ENCODE measurements at regions of chr4 and their contacts with region 1.

Region 1: GRCh38 chr4:55948726-55949474 is at the start of gene CEP135:
- DNase-seq: peak; percentile 98
- H3K4me3 Mint-ChIP-seq: peak within 1 kb of the TSS; percentile 87
- H3K27ac Mint-ChIP-seq: peak within 1 kb of the TSS; percentile 89
- H3K4me1 Mint-ChIP-seq: peaks cover 33% of the 10 kb centered on the region
- H3K27me3 Mint-ChIP-seq: no peaks in the 10 kb centered on the region
- total RNA-seq, gene CEP135: 16.3 and 16.9 TPM in 2 replicates

Region 2: GRCh38 chr4:55546756-55547465 is 402.0 kb before region 1 on chr4 and contains the start of gene CLOCK:
- intact Hi-C with region 1: loop called (anchors 2 kb)
- DNase-seq: peak; percentile 95
- H3K4me3 Mint-ChIP-seq: peak within 1 kb of the TSS; percentile 84
- H3K27ac Mint-ChIP-seq: peak within 1 kb of the TSS; percentile 88
- H3K4me1 Mint-ChIP-seq: peaks cover 25% of the 10 kb centered on the region
- H3K27me3 Mint-ChIP-seq: peaks cover 30% of the 10 kb centered on the region
- total RNA-seq, gene CLOCK: 9.8 and 10.8 TPM in 2 replicates

Region 3: DNA sequence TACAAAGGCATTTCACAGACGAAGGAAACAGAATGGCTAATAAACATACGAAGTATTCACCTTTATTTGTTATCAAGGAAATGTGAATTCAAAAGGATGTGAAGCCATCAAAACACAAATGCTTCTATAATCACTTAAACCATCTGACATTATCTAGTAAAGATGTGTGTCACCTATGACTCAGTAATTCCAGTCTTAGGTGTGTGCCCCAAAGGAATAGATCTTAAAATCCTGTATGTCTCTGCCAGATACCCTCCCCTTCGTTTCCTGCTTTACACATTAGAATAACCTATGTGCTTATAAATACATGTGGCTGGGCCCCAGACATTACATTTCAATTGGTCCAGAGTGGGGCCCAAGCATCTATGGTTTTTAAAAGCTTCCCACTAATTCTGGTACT is 41.9 kb before region 1 on chr4:
- intact Hi-C with region 1: loop called (anchors 1 kb)
- DNase-seq: no peak
- H3K4me3 Mint-ChIP-seq: no peak overlapping the region
- H3K27ac Mint-ChIP-seq: peak overlapping the region; percentile 72
- H3K4me1 Mint-ChIP-seq: peaks cover 11% of the 10 kb centered on the region
- H3K27me3 Mint-ChIP-seq: no peaks in the 10 kb centered on the region

Region 4: DNA sequence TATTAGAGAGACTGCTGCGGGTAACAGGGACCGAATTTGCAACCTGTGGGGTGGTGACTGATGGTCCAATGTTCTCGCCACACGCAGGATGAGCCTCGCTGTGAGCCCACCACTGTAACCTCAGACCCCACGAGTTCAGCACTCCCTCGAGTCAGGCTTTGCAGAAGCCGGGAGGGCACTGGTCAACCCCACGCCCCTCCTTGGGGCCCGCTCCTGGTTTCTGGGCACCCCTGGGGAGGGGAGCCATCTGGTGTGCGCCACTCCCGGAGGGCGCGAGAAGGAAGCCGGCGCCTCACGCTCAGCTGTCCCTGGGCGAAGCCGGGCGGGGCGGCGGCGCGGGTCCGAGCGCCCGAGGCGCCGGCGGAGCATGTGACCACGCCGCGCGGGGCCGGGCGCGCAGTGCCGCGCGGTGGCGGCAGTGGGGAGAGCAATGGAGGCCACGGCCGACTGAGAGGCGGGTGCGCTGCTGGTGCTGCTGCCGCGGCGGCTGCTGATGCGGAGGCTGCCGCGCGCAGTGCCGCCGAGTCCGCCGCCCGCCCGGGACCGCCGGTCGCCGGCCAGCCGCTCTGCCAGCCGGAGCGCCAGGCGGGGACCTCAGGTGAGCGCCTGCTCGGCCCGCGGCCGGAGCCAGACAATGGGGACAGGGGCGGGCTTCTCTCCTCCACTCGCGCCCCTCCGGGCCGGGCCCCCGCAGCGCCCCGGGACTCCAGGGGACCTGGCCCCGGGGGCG is 100.0 kb after region 1 on chr4:
- intact Hi-C with region 1: loop called (anchors 1 kb)
- DNase-seq: peak; percentile 89
- H3K4me3 Mint-ChIP-seq: peak overlapping the region; percentile 80
- H3K27ac Mint-ChIP-seq: no peak overlapping the region
- H3K4me1 Mint-ChIP-seq: peaks cover 13% of the 10 kb centered on the region
- H3K27me3 Mint-ChIP-seq: peaks cover 54% of the 10 kb centered on the region

Region 5: GRCh38 chr4:56301181-56302076 is 352.5 kb after region 1 on chr4:
- intact Hi-C with region 1: loop called (anchors 1 kb)
- DNase-seq: peak; percentile 91
- H3K4me3 Mint-ChIP-seq: peak overlapping the region; percentile 21
- H3K27ac Mint-ChIP-seq: no peak overlapping the region
- H3K4me1 Mint-ChIP-seq: peaks cover 11% of the 10 kb centered on the region
- H3K27me3 Mint-ChIP-seq: peaks cover 3% of the 10 kb centered on the region

Region 6: DNA sequence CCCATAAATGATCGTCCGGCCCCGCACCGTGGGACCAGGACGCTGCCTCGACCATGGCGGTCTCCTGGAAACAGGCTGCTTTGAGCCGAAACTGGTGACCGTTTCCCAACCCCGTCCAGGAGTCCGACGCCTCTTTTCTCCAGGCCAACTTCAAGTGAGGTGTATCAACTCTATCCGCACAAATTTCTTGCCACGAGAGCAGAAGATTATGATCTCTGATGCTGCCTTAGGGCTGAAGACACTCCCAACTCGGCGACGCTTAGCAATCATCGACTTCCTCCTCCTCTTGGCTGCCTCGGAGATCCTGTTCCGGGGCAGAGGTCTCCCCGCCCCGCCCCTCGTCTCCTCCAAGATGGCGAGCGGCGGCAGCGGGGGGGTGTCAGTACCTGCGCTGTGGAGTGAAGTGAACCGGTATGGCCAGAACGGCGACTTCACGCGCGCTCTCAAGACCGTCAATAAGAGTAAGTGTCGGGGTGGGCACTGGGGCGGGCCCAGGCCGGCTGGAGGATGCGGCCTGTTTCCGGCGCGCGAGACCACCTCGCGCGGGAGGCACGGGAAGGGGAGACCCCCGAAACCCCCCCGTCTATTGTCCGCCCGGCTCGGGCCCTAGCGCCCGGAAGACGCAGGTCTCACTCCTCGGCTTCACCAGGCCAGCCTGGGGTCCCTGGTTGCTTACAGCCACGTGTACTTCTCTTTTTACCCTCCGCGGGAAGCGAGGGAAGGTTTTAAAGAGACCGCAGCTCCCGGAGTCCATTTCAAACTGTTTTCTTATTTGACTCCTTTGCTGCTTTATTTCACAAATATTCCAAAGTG is 518.6 kb after region 1 on chr4 and contains the start of gene SRP72:
- intact Hi-C with region 1: loop called (anchors 2 kb)
- DNase-seq: peak; percentile 97
- H3K4me3 Mint-ChIP-seq: peak within 1 kb of the TSS; percentile 94
- H3K27ac Mint-ChIP-seq: peak within 1 kb of the TSS; percentile 95
- H3K4me1 Mint-ChIP-seq: peaks cover 45% of the 10 kb centered on the region
- H3K27me3 Mint-ChIP-seq: no peaks in the 10 kb centered on the region
- total RNA-seq, gene SRP72: 202 and 209 TPM in 2 replicates

Region 7: DNA sequence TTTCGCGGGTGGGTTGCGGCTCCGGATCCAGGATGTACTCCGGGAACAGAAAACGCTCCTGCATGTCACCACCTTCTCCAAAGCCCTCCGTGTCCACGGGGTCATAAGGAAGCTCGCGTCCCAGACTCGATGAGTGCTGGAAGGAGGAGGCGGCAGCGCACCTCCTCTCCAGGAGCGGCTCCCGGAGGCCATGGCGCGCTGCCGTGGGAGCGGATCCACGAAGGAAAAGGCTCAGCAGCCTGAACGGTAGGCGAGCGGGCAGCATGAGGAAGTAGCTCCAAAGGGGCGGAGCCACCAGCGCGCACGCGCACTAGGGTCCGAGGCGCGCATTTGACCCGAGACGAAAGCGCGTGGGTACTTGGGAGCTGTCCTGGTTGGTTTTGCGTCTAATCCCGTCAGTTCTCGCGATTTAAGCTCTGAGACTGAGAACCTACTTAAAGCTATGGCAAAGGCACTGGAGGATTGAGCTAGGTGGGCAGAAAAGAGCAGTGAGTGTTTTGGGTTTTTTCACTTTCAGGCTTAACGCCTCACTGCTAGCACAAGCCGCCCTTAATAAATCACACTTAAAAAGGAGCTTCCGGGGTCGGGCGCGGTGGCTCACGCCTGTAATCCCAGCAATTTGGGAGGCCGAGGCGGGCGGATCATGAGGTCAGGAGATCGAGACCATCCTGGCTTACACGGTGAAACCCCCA is 1028.6 kb after region 1 on chr4 and contains the start of gene NOA1:
- intact Hi-C with region 1: loop called (anchors 2 kb)
- DNase-seq: peak; percentile 100
- H3K4me3 Mint-ChIP-seq: peak within 1 kb of the TSS; percentile 98
- H3K27ac Mint-ChIP-seq: peak within 1 kb of the TSS; percentile 98
- H3K4me1 Mint-ChIP-seq: peaks cover 50% of the 10 kb centered on the region
- H3K27me3 Mint-ChIP-seq: peaks cover 2% of the 10 kb centered on the region
- total RNA-seq, gene NOA1: 17.7 and 18.5 TPM in 2 replicates